ENCODE measurements at regions of chr6 and their contacts with region 1.

Region 1: GRCh38 chr6:106097411-106098231 is 11.5 kb downstream of the PRDM1 start:
- DNase-seq: peak; percentile 83 to 92 (median 89)
- H3K4me3 ChIP-seq: peak overlapping the region; percentile 89 to 94
- H3K4me3 Mint-ChIP-seq: peak overlapping the region; percentile 95 to 99 (median 97)
- H3K27ac ChIP-seq: peak overlapping the region; percentile 69
- H3K27ac Mint-ChIP-seq: peak overlapping the region; percentile 94 to 98 (median 98)
- H3K4me1 ChIP-seq: peaks cover 71% of the 10 kb centered on the region
- H3K4me1 Mint-ChIP-seq: peaks cover 46 to 86% (median 60%) of the 10 kb centered on the region in 4 donors
- H3K27me3 ChIP-seq: no peaks in the 10 kb centered on the region
- H3K27me3 Mint-ChIP-seq: no peaks in the 10 kb centered on the region

Region 2: DNA sequence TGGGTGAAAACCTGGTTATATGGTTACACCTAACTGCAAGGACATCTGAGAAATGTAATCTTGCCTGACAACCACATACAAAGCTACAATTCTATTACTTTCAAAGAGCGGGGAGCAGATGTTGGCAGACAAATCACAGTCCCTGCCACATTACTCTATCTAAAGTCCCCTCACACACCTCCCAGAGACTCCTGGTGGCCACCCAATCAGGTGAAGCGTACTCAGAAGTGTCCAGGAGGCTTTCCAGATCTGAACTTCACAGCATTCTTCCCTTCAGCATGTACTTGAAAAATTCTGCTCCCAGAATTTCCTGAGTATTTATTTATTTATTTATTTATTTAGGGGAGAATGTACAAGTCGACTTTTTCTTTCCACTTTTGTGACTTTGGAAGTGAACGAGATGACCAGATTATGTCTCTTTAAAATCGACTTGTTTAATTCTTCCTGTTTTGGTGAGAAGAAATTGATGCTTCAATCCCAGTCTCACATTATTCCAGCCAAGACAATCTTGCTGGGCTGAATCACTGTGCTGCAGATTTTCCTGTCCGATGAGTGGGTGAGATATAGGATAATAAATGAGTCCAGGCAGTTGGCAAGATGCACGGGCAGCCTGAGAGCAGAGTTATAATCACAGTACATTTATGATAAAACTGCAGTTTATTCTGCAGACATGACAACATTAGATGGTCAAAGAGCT is 870.9 kb before region 1 on chr6:
- CTCF ChIA-PET with region 1: no interaction called
- POLR2A ChIA-PET with region 1: no interaction called
- intact Hi-C with region 1: no loop called
- DNase-seq: no peak
- H3K4me3 ChIP-seq: no peak overlapping the region
- H3K4me3 Mint-ChIP-seq: no peak overlapping the region
- H3K27ac ChIP-seq: no peak overlapping the region
- H3K27ac Mint-ChIP-seq: no peak overlapping the region
- H3K4me1 ChIP-seq: no peaks in the 10 kb centered on the region
- H3K4me1 Mint-ChIP-seq: no peaks in the 10 kb centered on the region
- H3K27me3 ChIP-seq: no peaks in the 10 kb centered on the region
- H3K27me3 Mint-ChIP-seq: peaks cover 5 to 10% of the 10 kb centered on the region in 2 donors

Region 3: DNA sequence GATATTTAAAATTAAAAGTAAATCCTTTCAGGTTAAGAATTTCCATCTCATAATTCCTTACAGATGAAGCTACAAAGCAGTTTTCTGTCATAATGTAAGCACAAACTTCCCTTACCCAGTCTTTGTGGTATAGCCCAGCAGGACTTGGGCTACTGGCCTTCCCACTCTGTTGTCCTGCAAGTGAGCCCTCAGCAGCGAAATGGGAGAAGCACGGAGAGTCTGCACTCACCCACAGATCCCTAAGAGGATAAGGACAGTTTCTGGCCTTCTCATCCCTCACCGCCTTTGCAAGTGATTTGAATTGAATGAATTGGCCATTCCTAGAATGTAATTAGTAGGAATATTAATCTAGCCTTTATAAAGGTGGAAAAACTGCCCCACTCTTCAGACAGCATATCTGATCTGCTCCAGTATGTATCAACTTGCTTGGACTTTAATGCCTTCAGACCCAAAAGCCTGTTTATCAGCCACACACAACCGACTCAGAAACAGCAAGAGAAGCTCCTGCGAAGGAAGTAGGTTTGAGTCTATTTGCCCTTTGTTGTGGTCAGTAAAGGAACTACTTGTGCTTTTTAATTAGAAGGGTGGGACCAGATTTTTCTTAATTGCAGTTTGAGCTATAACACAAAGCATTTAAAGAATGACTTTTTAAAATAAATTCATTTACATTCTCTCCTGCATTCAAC is 41.4 kb before region 1 on chr6:
- CTCF ChIA-PET with region 1: no interaction called
- POLR2A ChIA-PET with region 1: interaction called, 4 read pairs
- intact Hi-C with region 1: loop called (anchors 1 kb)
- DNase-seq: peak; percentile 42 to 65 (median 59)
- H3K4me3 ChIP-seq: peak overlapping the region in 1 of 2 donors; percentile 46
- H3K4me3 Mint-ChIP-seq: peak overlapping the region; percentile 37 to 81 (median 70)
- H3K27ac ChIP-seq: no peak overlapping the region
- H3K27ac Mint-ChIP-seq: peak overlapping the region; percentile 6 to 86 (median 33)
- H3K4me1 ChIP-seq: peaks cover 33% of the 10 kb centered on the region
- H3K4me1 Mint-ChIP-seq: peaks cover 17 to 32% (median 27%) of the 10 kb centered on the region in 4 donors
- H3K27me3 ChIP-seq: no peaks in the 10 kb centered on the region
- H3K27me3 Mint-ChIP-seq: no peaks in the 10 kb centered on the region

Region 4: GRCh38 chr6:106141441-106142237 is 44.0 kb after region 1 on chr6:
- CTCF ChIA-PET with region 1: interaction called, 7 read pairs
- POLR2A ChIA-PET with region 1: interaction called, 13 read pairs
- intact Hi-C with region 1: no loop called
- DNase-seq: peak; percentile 17 to 46 (median 31)
- H3K4me3 ChIP-seq: peak overlapping the region in 1 of 2 donors; percentile 5
- H3K4me3 Mint-ChIP-seq: peak overlapping the region in 7 of 8 donors; percentile 37 to 75 (median 71)
- H3K27ac ChIP-seq: no peak overlapping the region
- H3K27ac Mint-ChIP-seq: peak overlapping the region; percentile 74 to 90 (median 87)
- H3K4me1 ChIP-seq: peaks cover 44% of the 10 kb centered on the region
- H3K4me1 Mint-ChIP-seq: peaks cover 24 to 54% (median 34%) of the 10 kb centered on the region in 4 donors
- H3K27me3 ChIP-seq: no peaks in the 10 kb centered on the region
- H3K27me3 Mint-ChIP-seq: no peaks in the 10 kb centered on the region

Region 5: DNA sequence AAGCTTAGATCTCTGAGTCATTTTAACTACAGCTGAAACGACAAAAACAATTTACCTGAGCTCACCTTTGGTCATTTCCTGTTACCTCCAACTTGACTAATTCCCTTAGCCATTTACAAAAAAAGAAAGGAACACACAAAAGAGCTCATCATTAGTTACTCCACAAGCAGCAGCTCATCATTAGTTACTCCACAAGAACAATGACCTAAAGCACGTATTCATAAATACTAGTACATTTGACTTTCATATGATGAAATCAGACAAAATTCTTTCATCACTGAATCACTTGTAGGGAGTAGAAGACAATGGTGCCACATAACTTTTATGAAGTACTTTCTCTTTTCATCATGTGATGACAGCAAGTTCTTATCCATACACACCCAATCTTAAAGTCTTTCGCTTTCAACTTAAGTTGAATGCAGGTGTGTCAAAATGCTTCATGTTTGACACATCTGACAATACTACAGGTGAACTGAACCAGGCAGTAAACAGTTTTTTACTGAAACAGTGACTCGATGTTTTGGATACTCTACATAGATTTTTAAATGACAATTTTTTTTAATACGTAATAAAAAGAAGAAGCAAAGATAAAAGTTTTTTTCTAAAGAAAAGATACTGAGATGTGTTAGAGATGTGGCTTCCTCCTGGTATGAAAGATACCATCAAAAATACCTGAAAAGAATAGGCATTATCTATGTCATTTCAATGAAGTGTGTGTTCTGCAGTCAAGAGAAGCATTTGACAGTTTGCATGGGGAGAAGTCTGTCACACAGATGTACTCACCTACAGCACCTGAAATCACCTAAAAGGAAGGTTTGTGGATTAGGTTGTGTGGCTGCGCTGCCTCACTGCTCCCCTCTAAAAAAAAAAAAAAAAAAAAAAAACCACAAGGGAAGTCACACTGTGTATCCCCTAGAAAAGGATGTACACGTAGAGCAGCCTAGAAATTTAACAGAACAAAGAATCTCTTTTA is 97.6 kb after region 1 on chr6:
- CTCF ChIA-PET with region 1: interaction called, 3 read pairs
- POLR2A ChIA-PET with region 1: interaction called, 37 read pairs
- intact Hi-C with region 1: loop called (anchors 1 kb)
- DNase-seq: peak; percentile 56 to 68 (median 59)
- H3K4me3 ChIP-seq: peak overlapping the region in 1 of 2 donors; percentile 14
- H3K4me3 Mint-ChIP-seq: peak overlapping the region; percentile 53 to 81 (median 73)
- H3K27ac ChIP-seq: peak overlapping the region; percentile 17
- H3K27ac Mint-ChIP-seq: peak overlapping the region; percentile 86 to 95 (median 88)
- H3K4me1 ChIP-seq: peaks cover 47% of the 10 kb centered on the region
- H3K4me1 Mint-ChIP-seq: peaks cover 29 to 51% (median 37%) of the 10 kb centered on the region in 4 donors
- H3K27me3 ChIP-seq: no peaks in the 10 kb centered on the region
- H3K27me3 Mint-ChIP-seq: no peaks in the 10 kb centered on the region

Region 6: GRCh38 chr6:106519460-106520394 is 422.1 kb after region 1 on chr6:
- CTCF ChIA-PET with region 1: no interaction called
- POLR2A ChIA-PET with region 1: interaction called, 3 read pairs
- intact Hi-C with region 1: loop called (anchors 5 kb)
- DNase-seq: peak; percentile 76 to 95 (median 79)
- H3K4me3 ChIP-seq: peak overlapping the region; percentile 58 to 61
- H3K4me3 Mint-ChIP-seq: peak overlapping the region; percentile 92 to 98 (median 94)
- H3K27ac ChIP-seq: peak overlapping the region; percentile 78
- H3K27ac Mint-ChIP-seq: peak overlapping the region; percentile 94 to 98 (median 98)
- H3K4me1 ChIP-seq: peaks cover 66% of the 10 kb centered on the region
- H3K4me1 Mint-ChIP-seq: peaks cover 34 to 74% (median 46%) of the 10 kb centered on the region in 4 donors
- H3K27me3 ChIP-seq: no peaks in the 10 kb centered on the region
- H3K27me3 Mint-ChIP-seq: no peaks in the 10 kb centered on the region